Mammary epithelial cell (primary cell): ENCODE measurements at regions of chr17 and their contacts with region 1.

Region 1: DNA sequence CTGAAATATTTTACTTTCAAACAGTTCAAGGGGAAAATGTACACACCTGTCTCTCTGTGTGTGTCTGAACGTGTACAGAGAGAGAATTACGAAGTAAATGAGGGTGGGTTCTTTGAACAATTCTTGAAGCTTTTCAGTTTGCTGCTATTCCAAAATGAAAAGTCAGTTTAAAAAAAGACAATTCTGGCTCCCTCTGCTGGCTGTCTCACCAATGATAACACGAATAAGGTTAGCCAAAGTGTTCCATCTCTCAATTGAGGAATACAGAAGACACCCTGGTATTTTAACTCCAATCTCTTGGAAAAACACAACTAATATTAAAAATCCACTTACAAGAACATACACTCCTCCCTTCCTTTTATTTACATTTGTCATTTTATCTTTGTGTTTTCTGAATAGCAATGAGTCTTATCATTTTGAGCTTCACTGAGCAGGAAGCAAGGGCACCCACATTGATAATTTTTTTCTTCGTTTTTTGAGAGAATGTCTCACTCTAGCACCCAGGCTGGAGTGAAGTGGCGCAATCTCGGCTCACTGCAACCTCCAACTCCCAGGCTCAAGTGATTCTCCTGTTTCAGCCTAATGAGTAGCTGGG is 20.5 kb downstream of the EFTUD2 start:
- DNase-seq: no peak
- H3K4me3 ChIP-seq: no peak overlapping the region
- H3K27ac ChIP-seq: no peak overlapping the region
- H3K4me1 ChIP-seq: no peaks in the 10 kb centered on the region
- H3K27me3 ChIP-seq: no peaks in the 10 kb centered on the region
- CTCF ChIP-seq: peak; percentile 46 to 64

Region 2: DNA sequence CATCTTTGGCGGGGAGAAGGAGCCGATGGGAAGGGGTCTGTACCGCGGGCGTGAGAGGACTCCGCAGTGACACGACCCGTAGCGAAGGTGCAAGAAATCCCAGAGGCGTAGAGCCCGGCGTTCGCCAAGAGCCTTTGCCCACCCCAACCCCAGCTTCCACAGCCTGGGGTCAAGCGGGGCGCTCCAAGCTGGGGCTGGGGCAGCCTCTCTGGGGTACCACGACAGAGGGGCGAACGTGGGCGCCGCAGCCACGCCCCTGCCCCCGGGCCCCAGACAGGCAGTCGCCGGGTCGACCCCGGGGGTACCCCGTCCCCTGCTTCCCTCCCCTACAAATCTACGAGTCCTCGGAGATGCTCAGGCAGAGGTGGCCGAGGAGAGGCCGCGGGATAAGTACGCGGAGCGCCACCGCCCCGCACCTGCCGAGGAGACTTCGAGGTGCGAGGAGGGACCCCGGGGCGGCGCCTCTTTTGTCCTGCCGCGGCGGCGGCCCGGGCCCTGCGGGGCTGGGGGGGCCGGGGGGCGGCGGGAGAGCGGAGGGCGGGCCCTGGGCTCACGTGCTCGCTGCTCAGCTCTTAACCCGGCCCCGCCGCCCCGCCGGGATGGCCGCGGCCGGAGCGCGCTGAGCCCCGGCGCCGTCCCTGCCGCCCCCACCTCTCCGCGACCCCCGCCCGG is 120.2 kb before region 1 on chr17 and contains the start of gene ADAM11:
- CTCF ChIA-PET with region 1: no interaction called
- dilution Hi-C with region 1: loop called (anchors 10 kb)
- in situ Hi-C with region 1: no loop called
- intact Hi-C with region 1: no loop called
- DNase-seq: no peak
- H3K4me3 ChIP-seq: peak within 1 kb of the TSS in 2 of 3 experiments; percentile 32 to 36
- H3K27ac ChIP-seq: no peak within 1 kb of the TSS
- H3K4me1 ChIP-seq: peaks cover 5% of the 10 kb centered on the region
- H3K27me3 ChIP-seq: peaks cover 16% of the 10 kb centered on the region
- CTCF ChIP-seq: no peak
- total RNA-seq, gene ADAM11: 0.17 to 0.33 TPM

Region 3: DNA sequence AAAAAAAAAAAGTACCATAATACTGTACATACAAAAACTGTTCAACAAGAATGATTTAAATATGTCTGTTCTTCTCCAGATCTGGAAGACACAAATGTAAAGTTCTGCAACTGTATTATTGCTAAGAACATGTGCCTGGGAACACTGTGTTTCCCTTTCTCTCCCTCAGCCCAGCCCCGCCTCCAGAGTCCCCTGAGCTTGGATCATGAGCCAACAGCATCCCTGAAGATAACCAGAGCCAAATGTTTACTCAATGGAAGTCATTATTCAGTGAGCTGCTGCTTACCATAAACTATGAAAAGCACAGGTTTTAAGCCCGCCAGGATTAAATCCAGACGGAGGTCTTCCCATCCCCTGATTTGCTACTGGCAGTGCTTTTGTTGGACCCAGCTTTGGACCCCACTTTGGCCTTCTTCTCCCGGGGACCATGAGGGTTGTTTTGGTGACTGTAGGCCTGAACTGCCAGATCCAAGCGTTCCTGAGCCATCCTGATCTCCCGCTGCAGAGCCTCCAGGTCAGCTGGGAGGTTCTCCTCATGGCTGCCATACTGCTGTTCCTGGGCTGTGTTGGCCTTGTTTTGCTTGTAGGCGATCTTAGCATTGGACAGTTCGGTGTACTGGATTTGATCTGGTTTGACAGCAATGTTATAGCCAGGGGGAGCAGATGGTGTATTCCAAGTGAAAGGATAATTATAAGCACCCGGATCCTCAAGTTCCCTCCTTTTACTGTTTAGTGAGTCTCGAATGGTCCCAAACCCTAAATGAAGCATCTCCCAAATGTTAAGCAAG is 74.2 kb before region 1 on chr17:
- CTCF ChIA-PET with region 1: no interaction called
- dilution Hi-C with region 1: no loop called
- in situ Hi-C with region 1: no loop called
- intact Hi-C with region 1: no loop called
- DNase-seq: no peak
- H3K4me3 ChIP-seq: no peak overlapping the region
- H3K27ac ChIP-seq: no peak overlapping the region
- H3K4me1 ChIP-seq: no peaks in the 10 kb centered on the region
- H3K27me3 ChIP-seq: no peaks in the 10 kb centered on the region
- CTCF ChIP-seq: no peak

Region 4: GRCh38 chr17:44820631-44821212 is 58.0 kb before region 1 on chr17:
- CTCF ChIA-PET with region 1: no interaction called
- dilution Hi-C with region 1: loop called (anchors 5 kb)
- in situ Hi-C with region 1: no loop called
- intact Hi-C with region 1: no loop called
- DNase-seq: peak; percentile 88
- H3K4me3 ChIP-seq: peak overlapping the region; percentile 10 to 26 (median 13)
- H3K27ac ChIP-seq: peak overlapping the region; percentile 74
- H3K4me1 ChIP-seq: peaks cover 20% of the 10 kb centered on the region
- H3K27me3 ChIP-seq: no peaks in the 10 kb centered on the region
- CTCF ChIP-seq: no peak

Region 5: GRCh38 chr17:44844390-44844830 is 34.3 kb before region 1 on chr17:
- CTCF ChIA-PET with region 1: no interaction called
- dilution Hi-C with region 1: loop called (anchors 5 kb)
- in situ Hi-C with region 1: no loop called
- intact Hi-C with region 1: no loop called
- DNase-seq: no peak
- H3K4me3 ChIP-seq: no peak overlapping the region
- H3K27ac ChIP-seq: no peak overlapping the region
- H3K4me1 ChIP-seq: no peaks in the 10 kb centered on the region
- H3K27me3 ChIP-seq: no peaks in the 10 kb centered on the region
- CTCF ChIP-seq: no peak

Region 6: DNA sequence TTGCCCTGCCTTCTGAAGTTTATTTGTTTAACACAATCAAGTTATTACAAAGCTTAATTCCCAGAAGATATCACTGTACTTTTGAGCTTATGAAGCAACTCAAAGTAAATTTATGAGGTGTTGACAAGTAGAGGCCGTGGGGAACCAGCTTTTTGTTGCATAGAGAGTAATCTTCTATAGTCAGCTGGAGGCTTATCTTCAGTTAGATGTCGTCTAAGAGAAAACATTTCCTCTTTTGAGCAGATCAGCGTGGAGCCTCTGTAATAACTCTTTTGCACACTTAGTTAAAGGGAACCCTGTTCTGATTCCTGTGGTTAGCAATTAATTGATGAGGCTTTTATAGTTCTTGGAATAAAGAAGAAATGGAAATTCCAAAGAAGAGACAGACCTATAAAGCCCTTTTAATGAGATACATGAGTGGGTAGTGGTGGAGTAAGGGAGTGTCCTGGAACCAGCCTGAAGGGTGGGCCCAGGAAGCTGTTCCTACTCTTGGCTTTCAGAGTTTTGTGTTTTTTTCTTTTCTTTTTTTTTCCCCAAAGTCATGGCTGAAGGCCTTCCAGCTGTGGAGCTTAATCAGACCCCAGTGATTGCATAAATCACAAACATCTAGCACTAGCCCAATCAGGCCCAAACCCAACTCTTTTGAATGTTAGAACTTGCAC is 467.0 kb after region 1 on chr17:
- CTCF ChIA-PET with region 1: no interaction called
- dilution Hi-C with region 1: no loop called
- in situ Hi-C with region 1: no loop called
- intact Hi-C with region 1: no loop called
- DNase-seq: no peak
- H3K4me3 ChIP-seq: no peak overlapping the region
- H3K27ac ChIP-seq: no peak overlapping the region
- H3K4me1 ChIP-seq: peaks cover 8% of the 10 kb centered on the region
- H3K27me3 ChIP-seq: no peaks in the 10 kb centered on the region
- CTCF ChIP-seq: no peak